WTC11 (cell line): ENCODE measurements at regions of chr5 and their contacts with region 1.

Region 1: GRCh38 chr5:54944364-54944763 is 41.0 kb downstream of the ESM1 start:
- DNase-seq: no peak
- ATAC-seq: peak; percentile 34; the same call in 1 of the 2 replicates
- H3K4me3 Mint-ChIP-seq: no peak overlapping the region
- H3K27ac Mint-ChIP-seq: no peak overlapping the region
- H3K4me1 Mint-ChIP-seq: peaks cover 12% of the 10 kb centered on the region
- H3K27me3 Mint-ChIP-seq: no peaks in the 10 kb centered on the region; the same call in 1 of the 2 replicates
- CTCF ChIP-seq: peak; percentile 65; the same call in 1 of the 2 replicates

Region 2: GRCh38 chr5:54874373-54874921 is 69.9 kb before region 1 on chr5:
- CTCF ChIA-PET with region 1: no interaction called
- POLR2A ChIA-PET with region 1: no interaction called
- DNase-seq: no peak
- ATAC-seq: no peak
- H3K4me3 Mint-ChIP-seq: no peak overlapping the region
- H3K27ac Mint-ChIP-seq: no peak overlapping the region
- H3K4me1 Mint-ChIP-seq: peaks cover 51% of the 10 kb centered on the region
- H3K27me3 Mint-ChIP-seq: peaks cover 4% of the 10 kb centered on the region; the same call in 1 of the 2 replicates
- CTCF ChIP-seq: no peak

Region 3: DNA sequence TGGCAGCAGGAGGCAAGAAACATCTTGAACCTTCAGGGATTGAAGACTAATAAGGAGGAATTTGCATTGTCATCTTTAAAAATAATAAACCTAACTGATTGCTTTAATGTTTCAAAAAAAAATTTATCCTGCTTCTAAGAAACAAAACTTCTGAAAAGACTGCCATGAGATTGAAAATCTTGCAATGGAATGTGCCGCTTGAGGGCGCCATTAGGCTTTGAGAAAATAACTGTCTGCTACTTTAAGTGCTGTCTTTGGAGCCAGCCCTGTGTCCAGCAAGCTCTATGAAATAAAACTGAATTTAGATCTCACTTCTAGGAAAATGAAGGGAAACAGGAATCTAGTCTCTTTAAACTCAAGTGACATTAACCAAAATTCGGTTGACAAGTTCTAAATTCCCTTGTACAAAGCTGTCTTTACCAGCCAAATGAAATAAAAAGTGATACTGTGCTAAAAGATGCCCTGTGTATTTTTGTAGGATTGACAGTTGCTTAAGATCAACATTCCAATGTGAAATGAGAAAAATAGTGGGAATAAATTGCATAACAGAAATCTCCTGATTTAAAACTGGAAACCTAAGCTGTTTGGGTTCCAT is 38.3 kb before region 1 on chr5:
- CTCF ChIA-PET with region 1: interaction called, 14 read pairs
- POLR2A ChIA-PET with region 1: no interaction called
- DNase-seq: peak; percentile 79
- ATAC-seq: peak; percentile 53
- H3K4me3 Mint-ChIP-seq: no peak overlapping the region
- H3K27ac Mint-ChIP-seq: no peak overlapping the region
- H3K4me1 Mint-ChIP-seq: no peaks in the 10 kb centered on the region; the same call in none of the 2 replicates
- H3K27me3 Mint-ChIP-seq: no peaks in the 10 kb centered on the region
- CTCF ChIP-seq: peak; percentile 42; the same call in 1 of the 2 replicates

Region 4: GRCh38 chr5:54932789-54933188 is 11.6 kb before region 1 on chr5:
- CTCF ChIA-PET with region 1: interaction called, 19 read pairs
- POLR2A ChIA-PET with region 1: no interaction called
- DNase-seq: no peak
- ATAC-seq: no peak; the same call in 1 of the 2 replicates
- H3K4me3 Mint-ChIP-seq: no peak overlapping the region
- H3K27ac Mint-ChIP-seq: no peak overlapping the region
- H3K4me1 Mint-ChIP-seq: peaks cover 18% of the 10 kb centered on the region
- H3K27me3 Mint-ChIP-seq: no peaks in the 10 kb centered on the region
- CTCF ChIP-seq: no peak

Region 5: GRCh38 chr5:55021410-55021809 is 77.0 kb after region 1 on chr5:
- CTCF ChIA-PET with region 1: interaction called, 16 read pairs
- POLR2A ChIA-PET with region 1: no interaction called
- DNase-seq: no peak
- ATAC-seq: peak; percentile 36; the same call in 1 of the 2 replicates
- H3K4me3 Mint-ChIP-seq: no peak overlapping the region
- H3K27ac Mint-ChIP-seq: no peak overlapping the region
- H3K4me1 Mint-ChIP-seq: peaks cover 7% of the 10 kb centered on the region
- H3K27me3 Mint-ChIP-seq: peaks cover 1% of the 10 kb centered on the region; the same call in 1 of the 2 replicates
- CTCF ChIP-seq: no peak

Region 6: GRCh38 chr5:55037046-55037771 is 92.8 kb after region 1 on chr5:
- CTCF ChIA-PET with region 1: interaction called, 27 read pairs
- POLR2A ChIA-PET with region 1: no interaction called
- DNase-seq: peak; percentile 31
- ATAC-seq: peak; percentile 100
- H3K4me3 Mint-ChIP-seq: no peak overlapping the region
- H3K27ac Mint-ChIP-seq: no peak overlapping the region
- H3K4me1 Mint-ChIP-seq: peaks cover 20% of the 10 kb centered on the region
- H3K27me3 Mint-ChIP-seq: no peaks in the 10 kb centered on the region
- CTCF ChIP-seq: no peak

Region 7: GRCh38 chr5:55146543-55147151 is 202.3 kb after region 1 on chr5:
- CTCF ChIA-PET with region 1: interaction called, 28 read pairs
- POLR2A ChIA-PET with region 1: no interaction called
- DNase-seq: peak; percentile 92
- ATAC-seq: peak; percentile 97
- H3K4me3 Mint-ChIP-seq: peak overlapping the region; percentile 40; the same call in 1 of the 2 replicates
- H3K27ac Mint-ChIP-seq: no peak overlapping the region; the same call in 1 of the 2 replicates
- H3K4me1 Mint-ChIP-seq: peaks cover 7% of the 10 kb centered on the region
- H3K27me3 Mint-ChIP-seq: no peaks in the 10 kb centered on the region; the same call in none of the 2 replicates
- CTCF ChIP-seq: peak; percentile 80

Region 8: GRCh38 chr5:55159763-55160492 is 215.6 kb after region 1 on chr5 and contains the start of gene GPX8:
- CTCF ChIA-PET with region 1: interaction called, 22 read pairs
- POLR2A ChIA-PET with region 1: interaction called, 5 read pairs
- DNase-seq: peak; percentile 21
- ATAC-seq: peak; percentile 94
- H3K4me3 Mint-ChIP-seq: peak within 1 kb of the TSS; percentile 95
- H3K27ac Mint-ChIP-seq: peak within 1 kb of the TSS; percentile 97
- H3K4me1 Mint-ChIP-seq: peaks cover 8% of the 10 kb centered on the region
- H3K27me3 Mint-ChIP-seq: peaks cover 10% of the 10 kb centered on the region
- CTCF ChIP-seq: no peak
- total RNA-seq, gene GPX8: 30.6 to 39.2 TPM (median 33.7 TPM) in 3 replicates